Heart right ventricle (tissue), 16 donors: ENCODE measurements at regions of chr19 and their contacts with region 1.

Region 1: DNA sequence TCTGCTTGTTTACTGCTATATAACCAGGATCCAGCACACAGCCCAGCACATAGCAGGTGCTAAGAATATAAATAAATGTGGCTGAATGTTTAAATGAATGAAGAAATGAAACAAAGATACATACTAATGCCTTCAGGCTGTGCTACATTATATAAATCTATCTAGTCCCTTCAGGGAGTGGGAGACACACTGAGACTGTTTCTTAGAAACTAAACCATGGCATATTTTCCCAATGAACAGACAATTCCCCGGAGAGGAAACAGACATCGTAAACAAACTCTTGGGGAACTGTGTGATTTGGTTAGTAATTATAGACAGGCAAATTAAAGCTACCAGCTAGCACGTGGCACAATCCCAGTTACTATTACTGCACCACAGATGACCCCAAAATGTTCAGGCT is 9.7 kb upstream of the FEM1A start:
- DNase-seq: no peak
- ATAC-seq: no peak
- H3K4me3 ChIP-seq: no peak overlapping the region
- H3K27ac ChIP-seq: no peak overlapping the region
- H3K4me1 ChIP-seq: peaks cover 0 to 7% (median 0%) of the 10 kb centered on the region in 9 donors
- H3K27me3 ChIP-seq: peaks cover 0 to 8% (median 0%) of the 10 kb centered on the region in 7 donors
- CTCF ChIP-seq: no peak

Region 2: GRCh38 chr19:4723367-4724187 is 58.2 kb before region 1 on chr19 and contains the start of gene DPP9:
- intact Hi-C with region 1: no loop called
- DNase-seq: peak; percentile 96 to 97
- ATAC-seq: peak; percentile 95 to 97 (median 96)
- H3K4me3 ChIP-seq: peak within 1 kb of the TSS; percentile 76 to 97 (median 91)
- H3K27ac ChIP-seq: peak within 1 kb of the TSS; percentile 89 to 97 (median 94)
- H3K4me1 ChIP-seq: peaks cover 10 to 34% (median 24%) of the 10 kb centered on the region in 9 donors
- H3K27me3 ChIP-seq: no peaks in the 10 kb centered on the region
- CTCF ChIP-seq: peak in 6 of 9 donors; percentile 33 to 54 (median 46)
- total RNA-seq, gene DPP9: 34.2 to 52.2 (median 45.0) TPM

Region 3: GRCh38 chr19:4738734-4739133 is 43.1 kb before region 1 on chr19:
- intact Hi-C with region 1: loop called in 7 of 10 experiments (anchors 5 to 10 kb)
- DNase-seq: no peak
- ATAC-seq: peak in 1 of 8 donors; percentile 47
- H3K4me3 ChIP-seq: no peak overlapping the region
- H3K27ac ChIP-seq: no peak overlapping the region
- H3K4me1 ChIP-seq: peaks cover 0 to 12% (median 0%) of the 10 kb centered on the region in 9 donors
- H3K27me3 ChIP-seq: peaks cover 0 to 12% (median 0%) of the 10 kb centered on the region in 7 donors
- CTCF ChIP-seq: no peak

Region 4: DNA sequence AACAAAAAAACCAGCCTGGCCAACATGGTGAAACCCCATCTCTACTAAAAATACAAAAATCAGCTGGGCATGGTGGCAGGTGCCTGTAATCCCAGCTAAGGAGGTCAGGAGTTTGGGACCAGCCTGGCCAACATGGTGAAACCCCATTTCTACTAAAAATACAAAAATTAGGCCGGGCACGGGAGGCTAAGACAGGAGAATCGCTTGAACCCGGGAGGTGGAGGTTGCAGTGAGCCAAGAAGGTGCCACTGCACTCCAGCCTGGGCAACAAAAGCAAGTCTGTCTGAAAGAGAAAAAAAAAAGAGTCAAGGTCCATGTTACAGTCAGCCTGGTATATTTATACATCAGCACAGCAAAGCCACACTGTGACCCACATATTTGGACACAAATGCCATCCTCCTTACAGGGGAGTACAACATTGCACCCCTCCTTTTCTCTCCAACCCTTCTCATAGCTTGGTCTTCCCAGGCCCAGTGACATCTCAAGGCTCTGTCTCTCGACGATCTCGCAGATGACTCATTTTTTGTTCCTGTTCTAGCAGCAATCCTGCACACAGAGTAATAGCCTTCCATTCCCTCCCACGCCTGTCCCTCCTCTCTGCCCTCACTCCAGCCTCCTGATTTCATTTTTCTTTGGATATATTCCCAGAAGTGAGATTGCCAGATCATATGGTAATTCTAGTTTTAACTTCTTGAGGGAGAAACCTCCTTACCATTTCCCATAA is 37.2 kb before region 1 on chr19:
- intact Hi-C with region 1: loop called in 4 of 10 experiments (anchors 5 to 10 kb)
- DNase-seq: peak in 1 of 2 donors; percentile 48
- ATAC-seq: peak; percentile 63 to 94 (median 82)
- H3K4me3 ChIP-seq: no peak overlapping the region
- H3K27ac ChIP-seq: peak overlapping the region in 8 of 10 donors; percentile 39 to 65 (median 50)
- H3K4me1 ChIP-seq: peaks cover 0 to 30% (median 10%) of the 10 kb centered on the region in 9 donors
- H3K27me3 ChIP-seq: no peaks in the 10 kb centered on the region
- CTCF ChIP-seq: no peak

Region 5: DNA sequence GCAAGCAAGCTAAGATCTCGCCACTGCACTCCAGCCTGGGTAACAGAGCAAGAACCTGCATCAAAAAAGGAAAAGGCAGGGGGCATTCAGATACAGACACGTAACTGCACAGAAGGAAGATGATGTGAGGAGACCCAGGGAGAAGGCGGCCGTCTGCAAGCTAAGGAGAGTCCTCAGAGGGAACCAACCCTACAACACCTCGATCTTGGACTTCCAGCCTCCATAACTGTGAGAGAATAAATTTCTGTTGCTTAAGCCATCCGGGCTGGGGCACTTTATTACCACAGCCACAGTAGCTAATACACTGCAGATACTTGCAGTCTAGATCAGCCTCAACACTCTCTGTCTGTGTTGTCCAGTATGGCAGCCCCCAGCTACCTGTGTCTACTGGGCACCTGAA is 41.8 kb after region 1 on chr19:
- intact Hi-C with region 1: no loop called
- DNase-seq: no peak
- ATAC-seq: no peak
- H3K4me3 ChIP-seq: no peak overlapping the region
- H3K27ac ChIP-seq: no peak overlapping the region
- H3K4me1 ChIP-seq: peaks cover 0 to 4% (median 0%) of the 10 kb centered on the region in 9 donors
- H3K27me3 ChIP-seq: no peaks in the 10 kb centered on the region
- CTCF ChIP-seq: no peak